ENCODE measurements at regions of chr2 and their contacts with region 1.

Region 1: DNA sequence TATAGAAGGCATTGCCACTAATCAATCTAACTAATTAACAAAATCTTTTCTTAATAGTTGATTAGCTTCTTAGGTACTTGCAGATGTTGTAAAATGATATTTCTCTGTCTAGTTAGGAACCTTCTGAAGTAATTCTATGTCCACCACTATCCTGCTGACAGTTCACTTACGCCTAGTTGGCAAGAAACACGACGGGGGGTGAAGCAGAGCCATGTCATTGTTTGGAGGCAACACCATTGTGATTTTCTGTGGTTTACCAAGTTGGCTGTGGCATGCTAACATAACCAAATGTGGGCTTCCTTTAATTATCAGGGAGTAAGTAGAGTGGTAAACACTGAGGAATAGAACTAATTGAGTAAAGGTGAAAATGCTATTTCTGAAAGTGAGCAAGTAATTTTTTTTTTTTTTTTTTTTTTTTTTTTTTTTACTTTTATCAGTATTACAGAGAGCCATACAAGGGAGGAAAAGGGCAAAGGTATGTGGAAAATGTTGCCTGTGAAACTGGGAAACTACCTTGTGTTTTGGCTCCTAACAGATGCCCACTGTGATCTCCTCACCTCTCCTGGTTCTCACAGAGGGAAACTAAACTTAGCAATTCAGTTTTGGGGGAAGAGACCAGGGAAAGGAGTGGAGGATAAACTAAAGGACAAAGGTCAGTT is 126.8 kb downstream of the MEIS1 start:
- DNase-seq: no peak
- H3K4me3 ChIP-seq: no peak overlapping the region
- H3K27ac ChIP-seq: no peak overlapping the region
- H3K4me1 ChIP-seq: 0 out of 2 replicates have a peak, but pooled peaks cover 8% of the 10 kb centered on the region
- H3K27me3 ChIP-seq: no peaks in the 10 kb centered on the region
- CTCF ChIP-seq: no peak

Region 2: DNA sequence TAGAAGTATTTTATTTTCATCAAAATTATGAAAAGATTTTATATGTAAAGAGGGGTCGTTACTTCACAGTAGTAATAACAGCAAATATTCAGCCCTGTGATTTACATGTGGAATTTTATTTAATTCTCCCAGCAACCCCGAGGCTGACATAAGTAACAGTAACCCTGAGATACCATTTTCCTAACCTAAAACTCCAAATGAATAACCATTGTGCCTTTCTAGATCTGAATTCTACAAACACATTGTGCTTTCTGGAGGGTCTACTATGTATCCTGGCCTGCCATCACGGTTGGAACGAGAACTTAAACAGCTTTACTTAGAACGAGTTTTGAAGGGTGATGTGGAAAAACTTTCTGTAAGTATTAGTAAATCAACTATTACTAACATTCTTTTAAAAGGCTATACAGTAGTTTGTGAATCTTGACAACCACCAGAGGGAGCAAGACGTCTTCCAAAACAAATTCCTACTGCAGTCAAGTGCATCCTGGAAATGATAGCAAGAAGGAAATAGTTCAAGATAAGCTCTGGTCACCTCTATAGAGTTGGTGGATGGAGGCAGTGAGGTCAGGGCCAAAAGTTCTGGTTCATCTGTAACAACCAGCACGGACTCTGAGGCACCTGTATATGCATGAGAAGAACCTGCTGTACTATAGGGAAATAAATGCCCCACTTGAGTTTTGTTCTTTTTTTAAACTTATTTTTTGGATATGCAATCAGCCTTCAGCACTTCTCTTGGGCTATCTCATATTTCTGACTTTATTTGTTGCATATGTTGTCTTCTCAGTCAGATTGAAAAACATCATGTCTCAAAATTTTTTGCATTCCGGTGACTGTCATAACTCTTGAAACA is 1296.7 kb before region 1 on chr2:
- CTCF ChIA-PET with region 1: interaction called, 20 read pairs
- POLR2A ChIA-PET with region 1: no interaction called
- intact Hi-C with region 1: no loop called
- DNase-seq: peak; percentile 38 to 76
- H3K4me3 ChIP-seq: no peak overlapping the region
- H3K27ac ChIP-seq: no peak overlapping the region
- H3K4me1 ChIP-seq: peaks cover 9% of the 10 kb centered on the region; the same call in 1 of the 2 replicates
- H3K27me3 ChIP-seq: no peaks in the 10 kb centered on the region
- CTCF ChIP-seq: peak; percentile 92

Region 3: GRCh38 chr2:66543257-66543767 is 18.5 kb before region 1 on chr2:
- CTCF ChIA-PET with region 1: interaction called, 10 read pairs
- POLR2A ChIA-PET with region 1: no interaction called
- intact Hi-C with region 1: no loop called
- DNase-seq: no peak
- H3K4me3 ChIP-seq: no peak overlapping the region
- H3K27ac ChIP-seq: no peak overlapping the region
- H3K4me1 ChIP-seq: no peaks in the 10 kb centered on the region; the same call in 1 of the 2 replicates
- H3K27me3 ChIP-seq: no peaks in the 10 kb centered on the region
- CTCF ChIP-seq: no peak

Measured in PC-9 (cell line).